ENCODE measurements at regions of chr14 and their contacts with region 1.

Region 1: DNA sequence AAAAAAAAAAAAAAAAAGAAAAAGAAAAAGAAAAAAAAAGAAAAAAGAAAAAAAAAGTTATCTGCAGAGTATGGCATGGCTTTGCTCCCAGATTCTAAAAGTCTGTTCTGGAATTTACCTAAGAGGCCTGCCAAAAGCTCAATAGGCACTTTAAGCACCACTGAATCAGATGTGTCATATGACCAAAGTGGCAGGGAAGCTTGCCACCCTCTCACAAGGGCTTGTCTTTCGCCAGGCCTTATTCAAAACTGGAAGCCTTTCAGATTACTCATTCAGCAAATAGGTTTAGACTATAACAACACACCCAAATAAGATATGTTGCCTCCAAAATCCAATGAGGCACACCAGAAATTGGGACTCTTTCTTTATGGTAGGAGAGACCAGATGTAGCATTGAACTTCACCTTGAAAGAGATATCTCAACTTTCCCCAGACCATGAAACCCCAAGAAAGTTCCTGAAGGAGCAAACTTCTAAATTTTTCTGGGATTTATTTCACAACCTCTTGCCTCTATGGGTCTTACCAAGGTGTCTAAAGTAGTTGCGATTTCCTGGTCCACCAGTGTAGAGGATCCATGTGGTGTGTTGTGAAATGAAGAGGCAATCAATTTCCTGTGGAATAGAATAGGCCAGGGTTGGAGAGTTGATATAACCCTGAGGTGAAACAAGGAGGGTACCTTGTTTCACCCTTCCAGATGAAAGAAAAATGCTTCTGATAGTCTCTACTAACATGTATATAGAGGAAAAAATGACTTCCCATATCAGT is 218.8 kb downstream of the DAD1 start:
- DNase-seq: peak; percentile 44
- ATAC-seq: peak; percentile 97

Region 2: DNA sequence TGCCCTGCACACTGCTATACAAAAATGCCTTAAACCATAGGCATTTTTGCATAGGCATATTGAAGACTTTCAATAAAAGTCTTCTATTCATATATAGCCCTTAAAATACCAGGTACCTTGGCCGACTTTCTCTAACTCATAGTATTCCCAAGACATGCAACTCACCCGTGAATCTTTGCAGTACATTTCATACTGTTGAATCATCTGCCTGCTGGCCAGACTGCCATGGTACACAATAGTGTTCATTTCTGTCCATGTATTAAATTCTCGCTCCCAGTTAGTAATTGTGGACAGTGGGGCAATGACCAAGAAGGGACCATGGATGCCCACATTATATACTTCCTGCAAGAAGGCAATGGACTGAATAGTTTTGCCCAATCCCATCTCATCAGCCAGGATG is 962.1 kb before region 1 on chr14:
- intact Hi-C with region 1: no loop called
- DNase-seq: no peak
- ATAC-seq: no peak

Region 3: DNA sequence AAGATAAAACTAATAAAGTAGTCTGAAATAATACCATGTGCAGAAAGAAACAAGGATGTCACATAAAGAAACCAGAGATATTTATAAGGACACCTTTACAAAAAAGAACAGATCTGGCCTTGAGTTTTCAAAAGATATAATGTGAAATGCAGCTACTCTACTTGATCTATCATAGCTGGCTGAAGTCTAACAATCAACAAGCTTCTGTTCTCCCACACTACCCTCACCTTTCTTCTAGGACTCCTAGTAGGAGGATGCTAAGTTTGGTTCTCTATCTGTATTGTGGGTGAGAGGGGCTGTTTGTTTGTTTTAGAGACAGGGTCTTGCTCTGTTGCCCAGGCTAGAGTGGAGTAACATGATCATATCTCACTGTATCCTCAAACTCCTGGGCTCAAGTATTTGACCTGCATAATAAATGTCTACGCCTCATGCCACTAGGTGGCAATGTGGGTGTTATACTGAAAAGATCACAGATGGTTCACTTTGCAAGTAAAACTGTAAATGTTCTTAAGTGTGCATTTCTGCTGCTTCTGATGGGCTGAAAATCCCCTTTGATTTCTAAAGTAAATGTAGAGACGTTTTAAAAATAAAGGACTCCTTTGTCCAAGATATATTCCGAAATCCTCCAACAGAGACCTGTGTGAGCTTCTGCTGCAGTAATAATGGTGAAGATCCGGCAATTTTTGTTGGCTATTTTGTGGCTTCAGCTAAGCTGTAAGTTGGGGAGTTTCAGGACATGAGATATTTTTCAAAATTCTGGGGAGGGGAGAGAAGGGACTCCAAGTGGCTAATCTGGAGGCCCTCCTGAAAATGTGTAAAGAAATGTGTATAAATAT is 50.5 kb before region 1 on chr14:
- intact Hi-C with region 1: loop called (anchors 5 kb)
- DNase-seq: no peak
- ATAC-seq: peak; percentile 81

Region 4: GRCh38 chr14:22622255-22622654 is 252.0 kb after region 1 on chr14:
- intact Hi-C with region 1: no loop called
- DNase-seq: no peak
- ATAC-seq: no peak